ENCODE measurements at regions of chr1 and their contacts with region 1.

Region 1: GRCh38 chr1:162035241-162035640 is 11.6 kb upstream of the OLFML2B start:
- DNase-seq: peak; percentile 66
- H3K4me3 ChIP-seq: no peak overlapping the region
- H3K27ac ChIP-seq: no peak overlapping the region
- H3K4me1 ChIP-seq: peaks cover 14% of the 10 kb centered on the region
- H3K27me3 ChIP-seq: no peaks in the 10 kb centered on the region
- CTCF ChIP-seq: no peak

Region 2: DNA sequence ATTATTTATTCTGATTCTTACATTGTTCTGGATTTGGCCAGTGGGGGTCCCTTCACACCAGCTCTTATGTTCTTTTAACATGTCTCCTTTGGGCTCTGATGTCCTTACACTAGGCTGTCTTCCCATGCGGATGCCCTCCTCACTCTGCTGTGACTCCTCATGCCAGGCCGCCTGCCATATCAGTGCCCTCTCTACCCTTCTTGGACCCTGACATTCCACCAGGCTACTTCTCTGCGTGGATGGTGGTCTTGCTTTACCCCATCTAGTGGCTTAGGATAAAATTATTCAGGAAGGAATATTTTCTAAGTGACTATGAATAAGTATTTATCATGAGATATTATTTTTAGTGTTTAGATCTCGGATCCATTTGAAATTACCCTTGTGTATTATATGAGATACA is 247.9 kb before region 1 on chr1:
- CTCF ChIA-PET with region 1: interaction called, 60 read pairs
- dilution Hi-C with region 1: no loop called
- in situ Hi-C with region 1: loop called in 1 of 2 experiments (anchors 5 kb)
- intact Hi-C with region 1: loop called (anchors 1 kb)
- DNase-seq: no peak
- H3K4me3 ChIP-seq: no peak overlapping the region
- H3K27ac ChIP-seq: no peak overlapping the region
- H3K4me1 ChIP-seq: peaks cover 8% of the 10 kb centered on the region
- H3K27me3 ChIP-seq: no peaks in the 10 kb centered on the region
- CTCF ChIP-seq: no peak

Region 3: GRCh38 chr1:162145280-162145965 is 110.2 kb after region 1 on chr1:
- CTCF ChIA-PET with region 1: no interaction called
- dilution Hi-C with region 1: no loop called
- in situ Hi-C with region 1: no loop called
- intact Hi-C with region 1: no loop called
- DNase-seq: no peak
- H3K4me3 ChIP-seq: no peak overlapping the region
- H3K27ac ChIP-seq: no peak overlapping the region
- H3K4me1 ChIP-seq: peaks cover 17% of the 10 kb centered on the region
- H3K27me3 ChIP-seq: no peaks in the 10 kb centered on the region
- CTCF ChIP-seq: no peak